Vagina (tissue), 2 donors: ENCODE measurements at regions of chr3 and their contacts with region 1.

Region 1: DNA sequence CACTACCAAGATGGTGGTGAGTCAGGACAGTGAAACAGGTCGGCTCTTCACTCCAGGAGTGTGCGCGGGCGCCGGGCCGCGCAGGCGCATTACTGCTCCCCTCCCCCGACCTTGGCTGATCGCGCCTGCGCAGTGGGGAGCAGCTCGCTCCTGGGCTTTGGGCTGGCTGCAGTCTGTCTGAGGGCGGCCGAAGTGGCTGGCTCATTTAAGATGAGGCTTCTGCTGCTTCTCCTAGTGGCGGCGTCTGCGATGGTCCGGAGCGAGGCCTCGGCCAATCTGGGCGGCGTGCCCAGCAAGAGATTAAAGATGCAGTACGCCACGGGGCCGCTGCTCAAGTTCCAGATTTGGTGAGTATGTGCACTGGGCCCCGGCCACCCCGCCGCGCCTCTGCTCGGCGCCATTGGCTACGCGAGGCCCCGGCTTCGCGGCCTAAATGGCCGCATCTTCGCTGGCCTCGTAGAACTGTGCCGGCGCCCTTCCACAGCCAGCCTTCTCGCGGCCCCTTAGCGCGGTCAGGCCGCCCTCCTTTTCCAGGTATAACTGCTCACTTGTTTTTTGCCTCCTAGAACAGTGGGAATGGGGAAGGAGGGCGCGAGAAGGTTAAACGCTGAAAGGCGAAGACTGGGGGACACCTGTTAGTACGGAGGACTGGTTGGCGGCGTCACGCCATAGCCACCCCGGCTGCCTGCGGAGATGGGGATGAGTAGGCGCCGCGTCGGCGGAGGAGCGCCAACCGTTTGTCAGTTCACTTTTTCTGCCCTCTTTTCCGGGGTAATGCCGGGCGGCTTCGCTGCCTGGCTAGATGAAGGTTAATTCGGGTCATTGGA is at the start of gene SELENOT:
- DNase-seq: peak; percentile 97 to 98
- H3K4me3 ChIP-seq: peak within 1 kb of the TSS; percentile 74 to 83
- H3K27ac ChIP-seq: peak within 1 kb of the TSS; percentile 97
- H3K4me1 ChIP-seq: peaks cover 50% of the 10 kb centered on the region
- H3K27me3 ChIP-seq: no peaks in the 10 kb centered on the region
- CTCF ChIP-seq: peak in 1 of 3 experiments; percentile 20
- POLR2A ChIP-seq: peak in 1 of 2 donors; percentile 91
- total RNA-seq, gene SELENOT: 70.0 TPM

Region 2: GRCh38 chr3:150555859-150556436 is 47.4 kb before region 1 on chr3:
- intact Hi-C with region 1: loop called (anchors 10 kb)
- DNase-seq: no peak
- H3K4me3 ChIP-seq: no peak overlapping the region
- H3K27ac ChIP-seq: no peak overlapping the region
- H3K4me1 ChIP-seq: peaks cover 5% of the 10 kb centered on the region
- H3K27me3 ChIP-seq: no peaks in the 10 kb centered on the region
- CTCF ChIP-seq: no peak
- POLR2A ChIP-seq: no peak

Region 3: DNA sequence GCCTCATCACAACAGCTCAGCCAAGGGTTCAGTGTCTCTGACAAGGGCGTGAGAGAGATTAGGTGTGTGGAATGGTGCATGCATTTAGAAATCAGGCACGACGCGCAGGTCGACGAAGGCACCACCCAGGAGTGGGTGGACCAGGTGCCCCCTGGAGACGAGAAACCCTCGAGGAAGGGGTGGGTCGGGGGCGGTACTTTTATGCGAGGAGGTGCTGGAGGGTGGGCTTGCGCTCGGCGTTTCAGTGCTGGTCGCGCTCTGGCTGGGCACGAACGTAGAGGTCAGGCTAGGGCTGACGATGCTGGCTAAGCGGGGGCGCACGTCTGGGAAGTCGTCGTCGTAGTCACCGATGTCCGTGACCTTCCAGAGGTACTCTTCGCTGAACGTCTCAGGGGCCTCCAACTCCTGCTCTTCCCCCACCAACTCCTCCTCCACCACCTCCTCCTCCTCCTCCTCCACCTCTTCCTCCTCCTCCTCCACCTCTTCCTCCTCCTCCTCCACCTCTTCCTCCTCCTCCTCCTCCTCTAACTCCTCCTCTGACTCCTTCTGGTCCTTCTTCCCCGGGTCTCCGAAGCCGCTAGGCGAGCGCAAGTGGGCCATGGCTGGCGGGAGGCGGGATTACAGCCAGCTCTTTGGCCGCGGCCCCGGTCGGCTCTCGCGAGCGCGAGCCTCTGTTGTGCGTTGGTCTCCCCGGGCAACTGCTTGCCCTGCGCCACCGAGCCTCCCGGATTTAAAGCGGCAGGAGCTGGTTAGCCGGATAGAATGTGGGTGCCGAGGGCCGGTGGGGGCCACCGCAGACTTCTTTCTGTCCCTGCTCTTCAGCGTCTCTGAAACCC is 100.2 kb after region 1 on chr3 and contains the start of gene ERICH6:
- intact Hi-C with region 1: loop called (anchors 2 kb)
- DNase-seq: no peak
- H3K4me3 ChIP-seq: peak within 1 kb of the TSS; percentile 41 to 67
- H3K27ac ChIP-seq: peak within 1 kb of the TSS; percentile 84
- H3K4me1 ChIP-seq: peaks cover 6% of the 10 kb centered on the region
- H3K27me3 ChIP-seq: no peaks in the 10 kb centered on the region
- CTCF ChIP-seq: peak in 1 of 3 experiments; percentile 20
- POLR2A ChIP-seq: peak in 1 of 2 donors; percentile 7
- total RNA-seq, gene ERICH6: not detected

Region 4: GRCh38 chr3:150763122-150763841 is 159.9 kb after region 1 on chr3 and contains the start of gene SIAH2:
- intact Hi-C with region 1: loop called (anchors 5 kb)
- DNase-seq: peak in 1 of 2 donors; percentile 99
- H3K4me3 ChIP-seq: peak within 1 kb of the TSS; percentile 77 to 96
- H3K27ac ChIP-seq: peak within 1 kb of the TSS; percentile 99
- H3K4me1 ChIP-seq: peaks cover 41% of the 10 kb centered on the region
- H3K27me3 ChIP-seq: no peaks in the 10 kb centered on the region
- CTCF ChIP-seq: no peak
- POLR2A ChIP-seq: peak in 1 of 2 donors; percentile 86
- total RNA-seq, gene SIAH2: 71.0 TPM